IMR-90 (cell line): ENCODE measurements at regions of chr15 and their contacts with region 1.

Region 1: DNA sequence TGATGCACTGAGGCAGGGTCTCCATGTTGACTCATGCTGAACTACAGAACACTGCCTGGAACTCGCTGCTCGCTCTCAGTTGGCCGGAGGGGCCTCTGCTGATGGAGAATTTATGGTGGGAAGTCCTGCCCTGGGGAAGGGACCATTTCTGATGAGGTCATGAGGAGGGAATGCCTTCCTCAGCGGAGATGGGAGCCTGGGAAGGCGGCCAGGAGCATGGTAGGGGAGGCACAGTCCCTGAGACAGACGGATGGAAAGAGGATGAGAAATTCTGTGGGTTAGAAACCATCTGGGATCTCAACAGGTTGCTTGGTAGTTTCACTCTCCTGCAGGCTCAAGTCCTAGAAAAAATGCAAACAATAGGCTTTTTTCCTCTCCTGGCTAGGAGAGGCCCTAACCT is 56.8 kb upstream of the TPM1 start:
- DNase-seq: peak; percentile 81
- ATAC-seq: peak; percentile 76
- H3K4me3 ChIP-seq: no peak overlapping the region
- H3K27ac ChIP-seq: no peak overlapping the region
- H3K4me1 ChIP-seq: peaks cover 3% of the 10 kb centered on the region
- H3K27me3 ChIP-seq: no peaks in the 10 kb centered on the region
- CTCF ChIP-seq: no peak
- POLR2A ChIP-seq: no peak
- RAD21 ChIP-seq: no peak

Region 2: GRCh38 chr15:62935300-62936081 is 50.3 kb before region 1 on chr15:
- CTCF ChIA-PET with region 1: no interaction called
- POLR2A ChIA-PET with region 1: no interaction called
- dilution Hi-C with region 1: no loop called
- in situ Hi-C with region 1: loop called (anchors 5 kb)
- intact Hi-C with region 1: no loop called
- DNase-seq: no peak
- ATAC-seq: no peak
- H3K4me3 ChIP-seq: no peak overlapping the region
- H3K27ac ChIP-seq: no peak overlapping the region
- H3K4me1 ChIP-seq: peaks cover 13% of the 10 kb centered on the region
- H3K27me3 ChIP-seq: no peaks in the 10 kb centered on the region
- CTCF ChIP-seq: no peak
- POLR2A ChIP-seq: no peak
- RAD21 ChIP-seq: no peak

Region 3: DNA sequence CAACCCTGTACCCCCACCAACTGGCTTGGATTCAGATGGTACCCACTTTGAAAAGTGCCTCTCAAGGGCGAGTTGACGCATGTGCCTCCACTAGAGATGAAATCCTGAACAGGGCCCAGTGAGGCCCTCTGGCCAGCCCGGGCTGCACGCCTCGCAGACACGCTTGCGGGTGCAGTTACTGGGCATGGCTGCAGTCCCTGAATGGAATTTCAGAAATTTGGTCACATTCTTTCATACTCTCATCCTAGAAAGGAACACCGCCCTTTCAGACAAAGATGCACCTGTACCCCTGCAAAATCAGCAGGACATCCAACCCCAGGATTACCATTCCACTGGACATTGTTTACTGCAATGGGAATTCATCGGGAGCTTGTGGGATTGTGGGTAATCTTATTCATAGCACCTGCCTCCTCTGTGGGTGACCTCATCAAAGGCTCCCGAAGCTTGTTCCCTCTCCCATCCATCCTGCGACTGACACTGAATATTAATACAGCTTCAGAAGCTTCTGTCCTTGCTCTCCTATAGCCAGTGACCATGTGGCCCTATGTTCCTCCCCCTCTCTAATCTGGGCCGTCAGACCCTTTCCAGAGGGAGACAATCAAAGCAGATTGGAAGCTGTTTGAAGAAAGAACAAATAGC is 14.3 kb after region 1 on chr15:
- CTCF ChIA-PET with region 1: no interaction called
- POLR2A ChIA-PET with region 1: no interaction called
- dilution Hi-C with region 1: no loop called
- in situ Hi-C with region 1: no loop called
- intact Hi-C with region 1: no loop called
- DNase-seq: no peak
- ATAC-seq: no peak
- H3K4me3 ChIP-seq: no peak overlapping the region
- H3K27ac ChIP-seq: no peak overlapping the region
- H3K4me1 ChIP-seq: no peaks in the 10 kb centered on the region
- H3K27me3 ChIP-seq: no peaks in the 10 kb centered on the region
- CTCF ChIP-seq: no peak
- POLR2A ChIP-seq: no peak
- RAD21 ChIP-seq: no peak

Region 4: DNA sequence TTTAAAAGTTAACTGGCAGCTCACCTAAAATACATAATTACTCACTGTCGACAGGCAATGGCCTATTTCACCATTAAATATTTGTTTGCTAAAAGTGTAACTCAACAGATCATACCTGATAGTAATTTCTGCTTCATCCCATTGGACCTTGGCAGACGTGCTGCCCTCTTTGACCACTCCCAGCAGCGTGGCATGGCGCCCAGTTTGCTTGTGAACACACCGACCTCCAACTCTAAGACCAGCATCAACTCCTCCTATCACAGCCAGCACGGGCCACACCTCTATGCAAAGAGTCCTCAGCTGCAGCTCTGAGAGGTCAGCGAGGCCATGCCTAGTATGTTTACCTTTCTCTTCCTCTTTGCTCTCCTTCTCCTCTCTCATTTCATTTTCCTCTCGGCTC is 692.0 kb after region 1 on chr15:
- CTCF ChIA-PET with region 1: no interaction called
- POLR2A ChIA-PET with region 1: no interaction called
- dilution Hi-C with region 1: no loop called
- in situ Hi-C with region 1: no loop called
- intact Hi-C with region 1: no loop called
- DNase-seq: no peak
- ATAC-seq: no peak
- H3K4me3 ChIP-seq: no peak overlapping the region
- H3K27ac ChIP-seq: no peak overlapping the region; the same call in 1 of the 2 replicates
- H3K4me1 ChIP-seq: no peaks in the 10 kb centered on the region
- H3K27me3 ChIP-seq: no peaks in the 10 kb centered on the region
- CTCF ChIP-seq: no peak
- POLR2A ChIP-seq: no peak
- RAD21 ChIP-seq: no peak